Activated naive CD4-positive, alpha-beta T cell treated with anti-CD3 and anti-CD28 coated beads for 36 hours (primary cell): ENCODE measurements at regions of chr15 and their contacts with region 1.

Region 1: DNA sequence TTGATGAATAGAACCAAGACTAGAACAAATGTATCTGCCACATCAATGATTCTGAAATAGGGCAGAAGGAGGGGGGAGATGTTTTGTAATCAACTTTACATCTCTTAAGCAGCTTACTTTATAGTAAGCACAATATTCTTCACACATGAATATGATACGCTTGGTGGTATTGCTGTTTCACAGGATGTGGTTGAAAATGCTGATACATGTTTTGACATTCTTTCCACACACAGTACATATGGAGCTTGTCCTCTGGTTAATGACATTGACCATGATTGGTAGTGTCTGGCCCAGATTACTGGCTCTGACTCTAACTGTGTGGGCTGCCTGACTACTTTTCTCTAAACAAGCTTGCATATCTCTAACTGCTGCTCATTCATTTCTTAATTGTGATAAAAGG is 168.9 kb downstream of the KLHL25 start:
- DNase-seq: peak; percentile 43
- H3K4me3 Mint-ChIP-seq: no peak overlapping the region
- H3K27ac Mint-ChIP-seq: no peak overlapping the region
- H3K4me1 Mint-ChIP-seq: peaks cover 43% of the 10 kb centered on the region
- H3K27me3 Mint-ChIP-seq: no peaks in the 10 kb centered on the region

Region 2: DNA sequence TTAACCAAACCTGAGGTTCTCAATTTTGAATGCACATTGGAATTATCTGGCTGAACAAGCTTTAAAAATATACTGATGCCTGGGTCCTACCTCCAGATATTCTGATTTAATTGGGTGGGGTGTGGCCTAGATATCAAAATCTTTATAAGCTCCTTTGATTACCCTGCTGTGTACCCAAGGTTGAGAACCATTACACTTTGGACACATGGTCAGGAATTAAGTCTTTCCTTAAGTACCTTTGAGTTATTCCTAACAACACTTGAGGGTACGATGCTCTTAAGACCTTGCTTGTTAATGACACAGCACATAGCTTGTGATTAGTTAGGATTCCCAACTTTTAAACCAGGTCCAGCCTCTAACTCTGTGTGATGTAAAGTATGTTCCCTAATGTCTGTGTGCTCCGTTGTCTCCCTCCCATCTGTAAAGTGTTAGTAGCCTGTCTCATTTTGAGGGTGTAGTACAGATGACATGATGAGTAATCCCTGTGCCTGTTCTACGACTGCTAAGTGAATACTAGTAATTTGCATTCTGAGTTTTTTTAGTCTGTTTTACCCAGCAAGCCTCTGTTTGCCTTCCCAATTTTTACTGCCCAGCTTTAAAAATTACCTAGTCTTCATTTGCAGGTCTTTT is 14.0 kb after region 1 on chr15:
- CTCF ChIA-PET with region 1: no interaction called
- intact Hi-C with region 1: loop called (anchors 2 kb)
- DNase-seq: no peak
- H3K4me3 Mint-ChIP-seq: no peak overlapping the region
- H3K27ac Mint-ChIP-seq: no peak overlapping the region
- H3K4me1 Mint-ChIP-seq: peaks cover 30% of the 10 kb centered on the region
- H3K27me3 Mint-ChIP-seq: no peaks in the 10 kb centered on the region